ENCODE measurements at regions of chr5 and their contacts with region 1.

Region 1: DNA sequence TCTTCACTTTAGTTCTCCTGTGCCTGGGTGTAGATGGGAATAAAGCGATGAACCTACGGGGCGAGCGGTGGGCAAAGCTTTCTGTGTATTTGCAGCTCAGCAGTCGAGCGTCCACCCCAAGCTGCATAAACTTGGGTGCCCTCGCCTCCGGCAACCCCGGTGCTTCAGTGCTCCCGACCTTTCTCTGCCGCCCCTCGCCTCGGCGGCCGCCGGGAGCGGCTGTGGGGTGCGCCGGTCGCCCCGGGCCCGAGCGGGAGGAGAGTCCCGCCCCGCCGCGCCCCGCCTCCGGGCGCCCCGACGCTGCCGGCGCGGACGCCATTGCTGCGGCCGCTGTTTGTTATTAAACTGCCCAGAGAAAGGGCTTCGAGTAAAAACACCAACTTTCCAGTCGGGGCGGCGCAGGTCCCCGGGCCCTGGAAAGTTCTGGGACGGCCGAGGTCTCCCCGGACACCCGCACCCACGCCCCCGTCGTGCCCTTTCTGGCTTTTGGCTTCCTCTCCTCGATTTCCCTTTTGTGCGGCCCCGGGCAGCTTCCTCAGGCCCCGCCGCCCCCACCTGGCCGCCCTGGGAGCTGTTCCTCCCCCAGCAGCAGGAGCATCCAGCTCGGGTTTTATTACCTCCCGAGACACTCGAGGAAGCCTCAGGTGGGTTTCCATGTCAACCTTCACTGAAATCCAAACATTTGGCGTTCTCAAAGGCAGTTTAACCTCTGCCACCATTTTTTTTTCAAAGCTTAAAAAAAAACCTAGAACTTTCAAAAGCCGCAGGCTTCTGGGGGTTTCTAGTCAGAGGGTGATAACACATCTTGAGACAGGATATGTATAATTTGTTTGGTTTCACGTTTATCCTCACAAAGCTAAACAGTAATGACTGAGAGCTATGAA is 334.3 kb downstream of the CWC27 start:
- DNase-seq: peak; percentile 39
- H3K4me3 Mint-ChIP-seq: peak overlapping the region; percentile 73
- H3K27ac Mint-ChIP-seq: peak overlapping the region; percentile 33
- H3K4me1 Mint-ChIP-seq: peaks cover 41% of the 10 kb centered on the region
- H3K27me3 Mint-ChIP-seq: peaks cover 2% of the 10 kb centered on the region

Region 2: GRCh38 chr5:64634997-64635686 is 467.9 kb before region 1 on chr5:
- CTCF ChIA-PET with region 1: no interaction called
- intact Hi-C with region 1: loop called (anchors 10 kb)
- DNase-seq: no peak
- H3K4me3 Mint-ChIP-seq: no peak overlapping the region
- H3K27ac Mint-ChIP-seq: no peak overlapping the region
- H3K4me1 Mint-ChIP-seq: peaks cover 3% of the 10 kb centered on the region
- H3K27me3 Mint-ChIP-seq: peaks cover 13% of the 10 kb centered on the region

Region 3: DNA sequence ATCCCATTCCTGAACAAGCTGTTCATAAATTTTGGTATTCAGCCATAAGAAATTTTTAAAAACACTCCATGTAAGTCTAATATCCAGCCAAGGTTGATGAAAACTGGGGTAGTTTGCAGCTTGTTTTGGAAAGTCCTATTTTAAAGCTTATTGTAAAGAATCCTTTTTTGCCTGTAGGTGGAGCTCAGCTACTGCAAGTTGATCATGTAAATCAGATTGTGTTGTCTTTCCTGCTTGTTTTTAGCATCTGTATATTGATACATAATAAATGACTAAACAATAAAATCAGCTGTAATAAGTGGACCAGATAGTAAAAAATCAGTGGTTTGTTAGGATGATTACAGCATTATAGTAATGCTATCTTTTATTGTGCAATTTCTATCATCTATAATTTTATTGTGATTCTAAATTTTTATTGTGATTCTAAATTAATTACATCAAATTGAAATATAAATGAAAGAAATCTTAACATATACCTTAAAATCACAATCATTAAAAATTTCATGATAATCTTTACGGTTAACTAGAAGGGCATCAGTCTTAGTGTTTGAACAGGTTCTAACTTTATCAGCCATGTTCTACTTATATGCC is 291.9 kb before region 1 on chr5:
- CTCF ChIA-PET with region 1: interaction called, 4 read pairs
- intact Hi-C with region 1: loop called (anchors 1 kb)
- DNase-seq: peak; percentile 8
- H3K4me3 Mint-ChIP-seq: no peak overlapping the region
- H3K27ac Mint-ChIP-seq: no peak overlapping the region
- H3K4me1 Mint-ChIP-seq: peaks cover 4% of the 10 kb centered on the region
- H3K27me3 Mint-ChIP-seq: no peaks in the 10 kb centered on the region

Region 4: DNA sequence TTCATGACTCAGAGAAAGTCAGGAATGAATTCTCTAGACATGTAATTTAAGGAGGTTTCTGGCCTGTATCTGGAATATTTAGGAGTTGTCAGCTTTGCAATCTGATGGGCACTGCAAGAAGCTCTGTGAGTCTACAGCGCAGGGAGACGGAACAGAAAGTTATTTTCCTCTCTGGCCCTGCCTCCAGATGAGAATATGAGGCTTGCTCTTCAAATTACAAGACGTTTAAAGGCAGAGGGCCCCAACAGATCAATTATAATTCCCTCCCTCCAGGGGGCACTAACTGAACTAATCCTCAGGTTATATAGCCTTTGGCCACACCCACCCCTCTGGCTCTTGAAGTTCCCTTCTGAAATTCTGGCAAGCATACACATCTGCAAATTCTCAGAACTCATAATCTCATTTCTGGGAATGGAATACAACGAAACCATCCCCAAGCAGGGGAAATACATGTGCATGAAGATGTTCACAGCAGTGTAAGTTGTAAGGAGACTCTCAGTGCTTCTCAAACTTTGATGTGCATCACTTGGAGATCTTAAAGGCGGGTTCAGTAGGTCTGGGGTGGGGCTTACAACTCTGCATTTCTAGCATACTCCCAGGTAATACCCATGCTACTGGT is 26.7 kb before region 1 on chr5:
- CTCF ChIA-PET with region 1: interaction called, 10 read pairs
- intact Hi-C with region 1: loop called (anchors 2 kb)
- DNase-seq: peak; percentile 65
- H3K4me3 Mint-ChIP-seq: no peak overlapping the region
- H3K27ac Mint-ChIP-seq: no peak overlapping the region
- H3K4me1 Mint-ChIP-seq: peaks cover 8% of the 10 kb centered on the region
- H3K27me3 Mint-ChIP-seq: no peaks in the 10 kb centered on the region

Region 5: GRCh38 chr5:65172486-65173129 is 69.5 kb after region 1 on chr5:
- CTCF ChIA-PET with region 1: no interaction called
- intact Hi-C with region 1: loop called (anchors 5 kb)
- DNase-seq: peak; percentile 76
- H3K4me3 Mint-ChIP-seq: no peak overlapping the region
- H3K27ac Mint-ChIP-seq: no peak overlapping the region
- H3K4me1 Mint-ChIP-seq: peaks cover 9% of the 10 kb centered on the region
- H3K27me3 Mint-ChIP-seq: no peaks in the 10 kb centered on the region

Region 6: DNA sequence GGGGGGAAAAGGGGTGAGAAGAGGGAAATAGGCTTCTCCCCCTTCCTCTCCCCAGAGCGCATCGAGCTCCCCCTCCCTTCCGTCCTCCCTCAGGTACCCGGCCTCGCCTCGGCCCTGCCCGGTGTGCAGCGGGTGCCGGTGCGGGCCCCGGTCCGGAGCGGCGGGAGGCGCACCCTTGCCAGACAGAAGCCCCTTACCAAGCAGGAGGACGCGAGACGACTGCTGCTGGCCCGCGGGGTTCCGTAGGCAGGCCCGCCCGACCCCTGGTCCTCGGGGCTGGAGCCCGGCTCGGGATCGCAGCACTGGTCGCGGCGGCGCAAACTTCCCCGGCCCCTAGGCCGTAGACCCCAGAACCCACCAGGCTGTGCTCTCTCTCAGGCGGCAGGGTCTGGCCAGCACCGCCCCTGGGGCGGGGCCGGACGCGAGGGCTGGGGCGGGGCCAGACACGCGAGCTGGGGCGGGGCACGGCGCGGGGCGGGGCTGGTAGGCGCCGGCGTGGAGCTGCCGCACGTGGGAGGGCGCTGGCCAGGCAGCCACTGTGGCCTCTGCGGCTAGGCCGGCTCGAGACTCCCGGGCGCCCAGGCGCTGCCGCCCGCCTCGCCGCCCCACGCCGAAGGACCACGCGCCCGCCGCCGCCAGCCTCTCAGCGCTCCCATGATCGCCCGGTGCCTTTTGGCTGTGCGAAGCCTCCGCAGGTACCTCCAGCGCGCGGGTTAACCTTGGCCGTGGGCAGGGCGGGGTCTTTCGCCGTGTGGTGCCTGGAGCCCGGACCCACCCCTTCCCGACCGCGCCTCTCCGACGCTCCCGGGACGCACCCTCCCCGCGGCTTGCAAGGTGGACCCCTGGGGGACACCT is 618.9 kb after region 1 on chr5 and contains the starts of genes NLN and SGTB:
- CTCF ChIA-PET with region 1: no interaction called
- intact Hi-C with region 1: loop called (anchors 5 kb)
- DNase-seq: peak; percentile 80
- H3K4me3 Mint-ChIP-seq: peak within 1 kb of the TSS; percentile 88
- H3K27ac Mint-ChIP-seq: peak within 1 kb of the TSS; percentile 94
- H3K4me1 Mint-ChIP-seq: peaks cover 13% of the 10 kb centered on the region
- H3K27me3 Mint-ChIP-seq: no peaks in the 10 kb centered on the region
- total RNA-seq, gene NLN: 32.4 to 35.5 TPM
- total RNA-seq, gene SGTB: 16.1 to 17.3 TPM

Measured in activated naive CD4-positive, alpha-beta T cell treated with anti-CD3 and anti-CD28 coated beads for 36 hours (primary cell).